ENCODE measurements at regions of chr14 and their contacts with region 1.

Region 1: GRCh38 chr14:66403183-66403582 is 83.0 kb upstream of the CCDC196 start:
- DNase-seq: peak; percentile 54
- H3K4me3 Mint-ChIP-seq: no peak overlapping the region
- H3K27ac Mint-ChIP-seq: no peak overlapping the region
- H3K4me1 Mint-ChIP-seq: no peaks in the 10 kb centered on the region
- H3K27me3 Mint-ChIP-seq: no peaks in the 10 kb centered on the region
- CTCF ChIP-seq: peak; percentile 28

Region 2: DNA sequence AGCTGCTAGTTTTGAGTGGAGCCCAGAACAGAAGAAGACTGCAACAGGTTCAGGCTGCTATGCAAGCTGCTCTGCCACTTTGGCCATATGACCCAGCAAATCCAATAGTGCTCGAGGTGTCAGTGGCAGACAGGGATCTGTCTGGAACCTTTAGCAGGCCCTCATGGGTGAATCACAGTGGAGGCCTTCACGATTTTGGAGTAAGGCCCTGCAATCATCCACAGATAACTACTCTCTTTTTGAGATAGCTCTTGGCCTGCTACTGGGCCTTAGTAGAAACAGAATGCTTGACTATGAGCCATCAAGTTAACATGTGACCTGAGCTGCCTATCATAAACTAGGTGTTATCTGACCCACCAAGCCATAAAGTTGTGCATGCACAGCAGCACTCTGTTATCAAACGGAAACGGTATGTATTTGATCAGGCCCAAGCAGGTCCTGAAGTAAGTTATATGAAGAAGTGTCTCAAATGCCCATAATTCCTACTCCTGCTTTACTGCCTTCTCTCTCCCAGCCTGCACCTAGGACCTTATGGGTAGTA is 34.0 kb before region 1 on chr14:
- CTCF ChIA-PET with region 1: interaction called, 14 read pairs
- POLR2A ChIA-PET with region 1: no interaction called
- intact Hi-C with region 1: no loop called
- DNase-seq: no peak
- H3K4me3 Mint-ChIP-seq: no peak overlapping the region
- H3K27ac Mint-ChIP-seq: no peak overlapping the region
- H3K4me1 Mint-ChIP-seq: no peaks in the 10 kb centered on the region
- H3K27me3 Mint-ChIP-seq: no peaks in the 10 kb centered on the region
- CTCF ChIP-seq: no peak

Region 3: DNA sequence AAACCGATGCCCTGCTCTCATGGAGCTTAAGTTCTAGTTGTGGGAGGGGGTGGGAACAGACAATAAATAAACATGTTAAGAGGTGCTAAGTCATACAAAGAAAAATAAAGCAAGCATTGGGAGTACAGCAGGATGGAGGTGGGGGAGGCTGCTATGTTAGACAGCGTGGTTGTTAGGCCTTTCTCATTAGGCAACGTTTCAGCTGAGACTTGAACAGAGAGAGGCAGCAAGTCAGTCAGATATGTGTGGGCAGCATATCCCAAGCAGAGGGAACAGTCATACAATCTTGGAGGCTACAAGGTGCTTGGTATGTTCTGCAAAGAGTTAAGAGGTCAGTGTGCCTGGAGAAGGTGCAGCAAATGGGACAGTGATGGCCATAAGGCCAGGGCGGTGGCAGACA is 14.7 kb before region 1 on chr14:
- CTCF ChIA-PET with region 1: interaction called, 10 read pairs
- POLR2A ChIA-PET with region 1: no interaction called
- intact Hi-C with region 1: no loop called
- DNase-seq: no peak
- H3K4me3 Mint-ChIP-seq: no peak overlapping the region
- H3K27ac Mint-ChIP-seq: no peak overlapping the region
- H3K4me1 Mint-ChIP-seq: no peaks in the 10 kb centered on the region
- H3K27me3 Mint-ChIP-seq: no peaks in the 10 kb centered on the region
- CTCF ChIP-seq: no peak

Region 4: GRCh38 chr14:66413901-66414300 is 10.7 kb after region 1 on chr14:
- CTCF ChIA-PET with region 1: interaction called, 39 read pairs
- POLR2A ChIA-PET with region 1: no interaction called
- intact Hi-C with region 1: no loop called
- DNase-seq: no peak
- H3K4me3 Mint-ChIP-seq: no peak overlapping the region
- H3K27ac Mint-ChIP-seq: no peak overlapping the region
- H3K4me1 Mint-ChIP-seq: no peaks in the 10 kb centered on the region
- H3K27me3 Mint-ChIP-seq: no peaks in the 10 kb centered on the region
- CTCF ChIP-seq: no peak

Region 5: DNA sequence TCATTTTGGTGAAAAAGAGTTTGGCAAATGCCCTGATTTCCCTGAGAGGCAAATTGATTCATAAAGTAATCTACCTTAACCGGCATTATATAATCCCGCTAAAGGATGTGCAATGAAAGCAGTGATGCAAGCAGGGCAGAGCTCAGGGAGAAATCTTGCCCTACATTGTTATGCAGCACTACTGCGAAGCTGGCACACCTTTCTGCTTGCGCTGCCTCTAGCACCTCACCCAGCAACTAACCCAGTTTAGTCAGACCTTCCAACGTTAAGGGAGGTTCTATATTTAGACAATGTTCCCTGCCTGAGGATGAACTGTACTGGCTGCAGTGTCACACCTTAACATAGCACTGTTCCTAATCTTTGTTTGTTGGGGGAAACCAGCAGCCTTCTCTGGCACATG is 22.2 kb after region 1 on chr14:
- CTCF ChIA-PET with region 1: interaction called, 17 read pairs
- POLR2A ChIA-PET with region 1: no interaction called
- intact Hi-C with region 1: no loop called
- DNase-seq: peak; percentile 8
- H3K4me3 Mint-ChIP-seq: no peak overlapping the region
- H3K27ac Mint-ChIP-seq: no peak overlapping the region
- H3K4me1 Mint-ChIP-seq: no peaks in the 10 kb centered on the region
- H3K27me3 Mint-ChIP-seq: no peaks in the 10 kb centered on the region
- CTCF ChIP-seq: no peak

Region 6: DNA sequence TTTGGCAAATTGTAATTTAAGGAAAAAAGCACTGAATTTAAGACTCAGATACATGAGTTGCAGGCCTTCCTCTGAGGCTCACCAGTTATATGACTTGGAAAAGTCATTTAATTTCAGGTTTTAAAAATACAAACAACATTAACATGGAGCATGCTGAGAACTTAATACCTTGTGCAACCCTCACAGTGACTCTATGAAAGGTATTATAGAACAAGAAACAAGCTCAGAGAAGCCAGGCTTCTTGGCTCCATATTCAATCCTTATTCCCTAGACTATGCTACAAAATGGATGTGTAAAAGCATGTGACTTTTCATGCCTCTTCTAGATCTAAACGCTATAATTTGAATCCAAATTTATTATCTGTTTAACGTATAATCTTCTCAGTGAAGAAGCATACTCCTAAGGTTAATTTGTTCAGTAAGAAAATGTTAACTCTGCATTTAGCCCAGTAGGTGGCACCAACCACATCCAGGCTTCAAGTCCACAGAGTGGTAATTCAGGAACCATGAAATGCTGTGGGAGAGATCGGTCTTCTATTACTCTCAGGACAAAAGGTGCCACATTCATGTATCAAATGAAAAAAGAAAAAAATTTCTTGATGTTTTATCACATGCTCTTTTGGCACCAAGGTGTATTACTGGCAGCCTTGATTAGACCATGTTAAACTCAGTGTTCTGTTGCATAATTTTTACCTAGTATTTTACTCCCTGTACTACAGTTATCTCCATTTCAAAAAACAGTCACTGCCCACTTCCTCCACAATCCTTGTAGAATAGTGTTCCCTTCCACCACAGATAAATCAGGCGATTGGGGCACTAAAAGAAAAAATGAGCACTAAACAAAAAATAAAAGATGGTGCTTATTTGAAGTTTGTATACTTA is 92.3 kb after region 1 on chr14:
- CTCF ChIA-PET with region 1: interaction called, 16 read pairs
- POLR2A ChIA-PET with region 1: no interaction called
- intact Hi-C with region 1: loop called (anchors 1 kb)
- DNase-seq: peak; percentile 69
- H3K4me3 Mint-ChIP-seq: no peak overlapping the region
- H3K27ac Mint-ChIP-seq: no peak overlapping the region
- H3K4me1 Mint-ChIP-seq: no peaks in the 10 kb centered on the region
- H3K27me3 Mint-ChIP-seq: no peaks in the 10 kb centered on the region
- CTCF ChIP-seq: peak; percentile 58

Measured in MCF 10A (cell line).